ENCODE measurements at regions of chr13 and their contacts with region 1.

Region 1: GRCh38 chr13:108700435-108701170 is 71.2 kb downstream of the MYO16 start:
- DNase-seq: no peak
- H3K4me3 ChIP-seq: no peak overlapping the region
- H3K27ac ChIP-seq: no peak overlapping the region
- H3K4me1 ChIP-seq: no peaks in the 10 kb centered on the region
- H3K27me3 ChIP-seq: no peaks in the 10 kb centered on the region
- CTCF ChIP-seq: no peak
- EP300 ChIP-seq: no peak
- POLR2A ChIP-seq: no peak

Region 2: GRCh38 chr13:108120302-108120701 is 580.3 kb before region 1 on chr13:
- in situ Hi-C with region 1: no loop called
- intact Hi-C with region 1: loop called (anchors 5 kb)
- DNase-seq: no peak
- H3K4me3 ChIP-seq: no peak overlapping the region
- H3K27ac ChIP-seq: no peak overlapping the region
- H3K4me1 ChIP-seq: no peaks in the 10 kb centered on the region
- H3K27me3 ChIP-seq: no peaks in the 10 kb centered on the region
- CTCF ChIP-seq: no peak
- EP300 ChIP-seq: no peak
- POLR2A ChIP-seq: no peak

Measured in transverse colon (tissue), 4 donors.